MCF 10A (cell line): ENCODE measurements at regions of chr17 and their contacts with region 1.

Region 1: GRCh38 chr17:6548578-6549330 is 7.6 kb downstream of the PITPNM3 start:
- DNase-seq: no peak
- H3K4me3 Mint-ChIP-seq: no peak overlapping the region
- H3K27ac Mint-ChIP-seq: no peak overlapping the region
- H3K4me1 Mint-ChIP-seq: peaks cover 42% of the 10 kb centered on the region
- H3K27me3 Mint-ChIP-seq: no peaks in the 10 kb centered on the region
- CTCF ChIP-seq: no peak

Region 2: DNA sequence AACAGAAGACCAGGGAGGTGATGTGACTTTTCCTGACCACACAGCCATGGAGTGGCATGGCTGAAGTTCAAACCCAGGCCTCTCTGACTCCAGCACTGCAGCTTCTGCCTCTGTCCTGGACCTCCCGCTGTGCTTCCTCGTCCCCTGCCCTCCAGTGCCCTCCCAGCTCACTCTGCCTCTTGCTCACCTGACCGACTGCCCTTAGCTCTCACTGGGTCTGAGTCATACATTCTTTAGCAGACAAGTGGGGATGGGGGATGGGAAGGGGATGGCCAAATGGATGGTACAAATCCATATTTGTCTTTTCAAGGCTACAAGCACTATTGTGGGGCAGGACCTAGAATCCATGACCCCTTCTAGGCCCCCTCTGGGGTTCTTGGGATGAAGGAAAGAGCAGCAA is 25.4 kb before region 1 on chr17:
- CTCF ChIA-PET with region 1: interaction called, 3 read pairs
- POLR2A ChIA-PET with region 1: interaction called, 23 read pairs
- intact Hi-C with region 1: no loop called
- DNase-seq: peak; percentile 71
- H3K4me3 Mint-ChIP-seq: peak overlapping the region; percentile 26
- H3K27ac Mint-ChIP-seq: peak overlapping the region; percentile 77
- H3K4me1 Mint-ChIP-seq: peaks cover 33% of the 10 kb centered on the region
- H3K27me3 Mint-ChIP-seq: no peaks in the 10 kb centered on the region
- CTCF ChIP-seq: no peak

Region 3: GRCh38 chr17:6567529-6568183 is 18.9 kb after region 1 on chr17:
- CTCF ChIA-PET with region 1: no interaction called
- POLR2A ChIA-PET with region 1: interaction called, 11 read pairs
- intact Hi-C with region 1: no loop called
- DNase-seq: peak; percentile 95
- H3K4me3 Mint-ChIP-seq: no peak overlapping the region
- H3K27ac Mint-ChIP-seq: peak overlapping the region; percentile 63
- H3K4me1 Mint-ChIP-seq: peaks cover 23% of the 10 kb centered on the region
- H3K27me3 Mint-ChIP-seq: no peaks in the 10 kb centered on the region
- CTCF ChIP-seq: no peak

Region 4: GRCh38 chr17:6623941-6624340 is 75.2 kb after region 1 on chr17:
- CTCF ChIA-PET with region 1: no interaction called
- POLR2A ChIA-PET with region 1: no interaction called
- intact Hi-C with region 1: no loop called
- DNase-seq: no peak
- H3K4me3 Mint-ChIP-seq: no peak overlapping the region
- H3K27ac Mint-ChIP-seq: no peak overlapping the region
- H3K4me1 Mint-ChIP-seq: peaks cover 6% of the 10 kb centered on the region
- H3K27me3 Mint-ChIP-seq: no peaks in the 10 kb centered on the region
- CTCF ChIP-seq: no peak